AG04449 (cell line): ENCODE measurements at regions of chr13 and their contacts with region 1.

Region 1: GRCh38 chr13:97221989-97222700 is at the start of gene MBNL2:
- DNase-seq: peak; percentile 75
- H3K4me3 ChIP-seq: peak within 1 kb of the TSS; percentile 73
- CTCF ChIP-seq: no peak

Region 2: GRCh38 chr13:97202761-97203160 is 19.4 kb before region 1 on chr13:
- CTCF ChIA-PET with region 1: no interaction called
- POLR2A ChIA-PET with region 1: no interaction called
- DNase-seq: no peak
- H3K4me3 ChIP-seq: no peak overlapping the region
- CTCF ChIP-seq: no peak

Region 3: DNA sequence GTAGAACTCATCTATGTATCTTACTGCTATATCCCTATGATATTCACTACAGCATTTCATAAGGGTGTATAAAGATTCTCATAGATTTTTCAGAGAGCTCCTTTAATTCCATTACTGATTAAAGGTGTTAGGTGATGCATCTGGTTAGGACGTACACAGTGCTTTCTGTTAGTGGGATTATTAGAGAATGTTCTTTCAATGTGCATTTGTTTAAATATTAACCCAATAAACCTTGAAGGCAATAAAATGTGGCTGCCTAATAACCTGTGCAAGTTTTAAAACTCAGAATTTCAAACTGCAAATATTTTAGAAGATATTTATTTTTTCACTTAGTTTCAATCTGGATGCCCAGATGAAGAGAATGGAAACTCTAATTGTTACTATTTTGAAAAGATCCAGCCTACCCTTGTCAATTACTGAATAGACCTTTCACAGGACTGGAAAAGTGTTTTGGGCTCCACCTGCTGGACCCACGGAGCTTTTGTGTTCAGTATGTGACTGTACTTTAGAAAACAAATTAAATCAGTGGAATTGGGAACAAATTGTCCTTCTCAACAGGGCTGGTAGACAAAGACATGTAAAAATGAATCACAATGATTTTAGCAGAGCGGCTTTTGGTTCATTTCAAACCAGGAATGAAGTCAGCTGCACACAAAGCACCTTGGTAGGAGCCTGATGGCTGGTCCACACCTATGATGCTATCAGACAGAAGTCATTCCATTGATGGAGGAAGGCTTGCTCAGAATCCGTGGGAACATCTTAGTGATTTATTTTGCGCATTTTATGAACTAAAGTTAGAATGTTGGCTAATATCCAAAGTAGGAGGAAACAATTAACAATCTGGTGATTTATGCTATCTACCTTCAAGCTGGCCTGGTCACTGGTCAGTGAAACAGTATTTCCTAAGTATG is 122.4 kb after region 1 on chr13:
- CTCF ChIA-PET with region 1: interaction called, 57 read pairs
- POLR2A ChIA-PET with region 1: no interaction called
- DNase-seq: no peak
- H3K4me3 ChIP-seq: no peak overlapping the region
- CTCF ChIP-seq: peak; percentile 64

Region 4: DNA sequence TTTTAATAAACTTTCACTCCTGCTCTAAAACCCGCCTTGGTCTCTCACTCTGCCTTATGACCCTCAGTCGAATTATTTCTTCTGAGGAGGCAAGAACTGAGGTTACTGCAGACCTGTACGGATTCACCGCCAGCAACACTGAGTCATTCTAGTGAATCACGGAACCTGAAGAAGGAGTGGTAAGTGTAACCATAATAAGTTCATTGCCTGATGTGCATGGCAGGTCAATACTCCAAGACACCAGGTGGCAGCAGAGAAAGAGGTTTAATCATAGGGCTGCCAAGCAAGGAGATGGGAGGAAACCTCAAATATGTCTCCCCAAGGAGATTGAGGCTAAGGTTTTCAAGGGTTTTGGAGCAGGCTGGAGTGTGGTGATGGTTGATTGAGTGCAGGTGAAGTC is 527.0 kb after region 1 on chr13:
- CTCF ChIA-PET with region 1: no interaction called
- POLR2A ChIA-PET with region 1: no interaction called
- DNase-seq: no peak
- H3K4me3 ChIP-seq: no peak overlapping the region
- CTCF ChIP-seq: no peak